Naive thymus-derived CD4-positive, alpha-beta T cell (primary cell): ENCODE measurements at regions of chr22 and their contacts with region 1.

Region 1: DNA sequence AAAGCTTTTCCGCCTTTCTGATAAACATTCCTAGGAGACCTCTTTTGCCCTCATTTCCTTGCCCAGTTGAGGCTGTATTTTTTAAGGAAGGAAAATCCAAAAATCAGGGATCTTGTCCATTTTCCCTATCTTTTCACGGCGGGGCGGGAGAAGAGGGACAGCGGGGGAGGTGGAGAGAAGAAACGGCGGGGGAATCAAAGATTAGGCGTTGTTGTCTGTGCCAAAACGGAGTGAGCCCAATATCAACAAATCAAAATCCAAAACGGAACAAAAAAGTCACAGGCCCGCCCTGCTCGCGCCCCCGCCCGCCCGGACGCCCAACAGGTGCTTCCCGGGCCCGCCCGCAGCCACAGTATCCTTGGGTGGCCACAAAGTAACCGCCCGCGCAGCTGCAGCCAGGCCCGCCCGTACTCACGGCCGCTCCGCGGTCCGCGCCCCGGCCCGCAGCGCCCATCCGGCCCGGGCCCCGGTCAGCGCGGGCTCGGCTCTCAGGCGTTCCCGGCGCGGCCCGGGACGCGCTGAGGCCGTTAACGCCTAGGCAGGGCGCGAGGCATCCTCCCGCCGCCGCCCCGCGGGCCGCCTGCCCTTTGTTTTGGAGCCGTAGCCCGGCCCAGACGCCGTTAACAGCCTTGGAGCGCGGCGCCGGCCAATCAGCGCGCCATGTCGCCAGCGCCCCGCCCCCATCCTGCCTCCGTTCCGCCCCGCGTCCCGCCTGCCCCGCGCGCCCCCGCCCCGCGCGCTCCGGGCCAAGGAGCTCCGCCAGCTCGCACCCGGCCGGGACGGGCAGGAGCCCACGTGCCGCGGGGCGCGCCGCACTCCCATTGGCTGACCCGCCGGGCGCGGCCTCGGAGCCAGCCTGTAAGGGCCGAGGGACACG is at the start of gene YPEL1:
- DNase-seq: peak; percentile 94 to 99 (median 97)
- ATAC-seq: peak; percentile 96
- H3K4me3 ChIP-seq: peak within 1 kb of the TSS; percentile 51
- H3K4me3 Mint-ChIP-seq: peak within 1 kb of the TSS; percentile 86 to 96 (median 92)
- H3K27ac ChIP-seq: peak within 1 kb of the TSS; percentile 66
- H3K27ac Mint-ChIP-seq: peak within 1 kb of the TSS; percentile 67 to 91 (median 85)
- H3K4me1 ChIP-seq: peaks cover 0 to 7% of the 10 kb centered on the region in 2 donors
- H3K4me1 Mint-ChIP-seq: peaks cover 13 to 26% (median 15%) of the 10 kb centered on the region in 7 donors
- H3K27me3 ChIP-seq: no peaks in the 10 kb centered on the region
- H3K27me3 Mint-ChIP-seq: peaks cover 0 to 22% (median 0%) of the 10 kb centered on the region in 5 donors
- total RNA-seq, gene YPEL1: 2.5 to 9.5 (median 3.6) TPM

Region 2: GRCh38 chr22:21666786-21667185 is 68.7 kb before region 1 on chr22:
- CTCF ChIA-PET with region 1: no interaction called
- POLR2A ChIA-PET with region 1: interaction called, 6 read pairs
- intact Hi-C with region 1: loop called (anchors 1 to 2 kb)
- DNase-seq: no peak
- ATAC-seq: no peak
- H3K4me3 ChIP-seq: peak overlapping the region; percentile 99
- H3K4me3 Mint-ChIP-seq: peak overlapping the region; percentile 95 to 100 (median 98)
- H3K27ac ChIP-seq: peak overlapping the region; percentile 86
- H3K27ac Mint-ChIP-seq: peak overlapping the region; percentile 79 to 99 (median 97)
- H3K4me1 ChIP-seq: peaks cover 6 to 16% of the 10 kb centered on the region in 2 donors
- H3K4me1 Mint-ChIP-seq: peaks cover 29 to 45% (median 42%) of the 10 kb centered on the region in 7 donors
- H3K27me3 ChIP-seq: no peaks in the 10 kb centered on the region
- H3K27me3 Mint-ChIP-seq: peaks cover 0 to 2% (median 0%) of the 10 kb centered on the region in 5 donors

Region 3: GRCh38 chr22:21766691-21767462 is 31.4 kb after region 1 on chr22:
- CTCF ChIA-PET with region 1: no interaction called
- POLR2A ChIA-PET with region 1: interaction called, 3 read pairs
- intact Hi-C with region 1: loop called in 1 of 2 experiments (anchors 2 kb)
- DNase-seq: peak in 1 of 9 donors; percentile 68
- ATAC-seq: peak; percentile 82
- H3K4me3 ChIP-seq: peak overlapping the region; percentile 14
- H3K4me3 Mint-ChIP-seq: peak overlapping the region in 2 of 10 donors; percentile 39 to 59
- H3K27ac ChIP-seq: no peak overlapping the region
- H3K27ac Mint-ChIP-seq: peak overlapping the region in 8 of 9 donors; percentile 36 to 80 (median 57)
- H3K4me1 ChIP-seq: peaks cover 0 to 66% of the 10 kb centered on the region in 2 donors
- H3K4me1 Mint-ChIP-seq: peaks cover 6 to 61% (median 20%) of the 10 kb centered on the region in 7 donors
- H3K27me3 ChIP-seq: no peaks in the 10 kb centered on the region
- H3K27me3 Mint-ChIP-seq: no peaks in the 10 kb centered on the region

Region 4: DNA sequence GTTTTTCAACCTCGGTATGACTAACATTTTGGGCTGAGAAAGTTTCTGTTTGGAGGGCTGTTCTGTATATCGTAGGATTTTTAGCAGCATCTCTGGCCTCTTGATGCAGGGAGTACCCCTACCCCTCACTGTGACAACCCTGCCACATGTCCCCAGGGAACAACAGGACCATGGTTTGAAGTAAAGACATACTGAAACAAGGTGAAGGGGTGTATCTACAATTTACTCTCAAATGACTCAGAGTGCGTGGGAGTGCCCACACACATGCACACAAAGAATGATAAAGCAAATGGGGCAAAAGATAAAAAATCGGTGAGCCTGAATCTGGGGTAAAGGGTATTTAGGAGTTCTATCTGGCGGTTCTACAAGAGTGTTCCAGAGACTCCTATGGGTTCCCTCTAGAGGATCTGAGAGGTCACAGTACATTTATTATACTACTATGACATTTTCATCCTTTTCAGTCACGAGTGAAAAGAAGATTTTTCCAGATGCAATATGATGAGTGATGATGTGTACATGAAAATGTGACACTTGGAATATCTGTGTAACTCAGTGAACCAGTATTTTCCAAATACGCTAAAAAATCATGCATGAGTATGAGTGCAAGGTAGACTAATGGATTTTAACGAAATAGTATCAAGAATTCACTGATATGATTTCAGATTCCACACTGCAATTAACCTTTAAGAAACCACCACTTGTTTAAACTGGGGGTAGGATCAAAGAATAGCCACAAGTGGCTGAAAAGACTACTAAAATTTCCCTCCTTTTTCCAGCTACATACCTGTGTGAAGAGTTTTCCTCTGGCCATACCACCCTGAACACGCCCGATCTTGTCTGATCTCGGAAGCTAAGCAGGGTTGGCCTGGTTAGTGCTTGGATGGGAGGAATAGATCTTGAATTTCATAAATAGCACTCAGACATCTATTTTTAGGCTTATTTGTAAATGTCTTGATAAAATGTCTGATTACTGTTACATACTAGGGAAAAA is 56.5 kb after region 1 on chr22:
- CTCF ChIA-PET with region 1: no interaction called
- POLR2A ChIA-PET with region 1: no interaction called
- intact Hi-C with region 1: no loop called
- DNase-seq: peak in 1 of 9 donors; percentile 53
- ATAC-seq: no peak
- H3K4me3 ChIP-seq: no peak overlapping the region
- H3K4me3 Mint-ChIP-seq: no peak overlapping the region
- H3K27ac ChIP-seq: no peak overlapping the region
- H3K27ac Mint-ChIP-seq: peak overlapping the region in 5 of 9 donors; percentile 2 to 61 (median 36)
- H3K4me1 ChIP-seq: no peaks in the 10 kb centered on the region
- H3K4me1 Mint-ChIP-seq: peaks cover 0 to 12% (median 0%) of the 10 kb centered on the region in 7 donors
- H3K27me3 ChIP-seq: no peaks in the 10 kb centered on the region
- H3K27me3 Mint-ChIP-seq: no peaks in the 10 kb centered on the region

Region 5: DNA sequence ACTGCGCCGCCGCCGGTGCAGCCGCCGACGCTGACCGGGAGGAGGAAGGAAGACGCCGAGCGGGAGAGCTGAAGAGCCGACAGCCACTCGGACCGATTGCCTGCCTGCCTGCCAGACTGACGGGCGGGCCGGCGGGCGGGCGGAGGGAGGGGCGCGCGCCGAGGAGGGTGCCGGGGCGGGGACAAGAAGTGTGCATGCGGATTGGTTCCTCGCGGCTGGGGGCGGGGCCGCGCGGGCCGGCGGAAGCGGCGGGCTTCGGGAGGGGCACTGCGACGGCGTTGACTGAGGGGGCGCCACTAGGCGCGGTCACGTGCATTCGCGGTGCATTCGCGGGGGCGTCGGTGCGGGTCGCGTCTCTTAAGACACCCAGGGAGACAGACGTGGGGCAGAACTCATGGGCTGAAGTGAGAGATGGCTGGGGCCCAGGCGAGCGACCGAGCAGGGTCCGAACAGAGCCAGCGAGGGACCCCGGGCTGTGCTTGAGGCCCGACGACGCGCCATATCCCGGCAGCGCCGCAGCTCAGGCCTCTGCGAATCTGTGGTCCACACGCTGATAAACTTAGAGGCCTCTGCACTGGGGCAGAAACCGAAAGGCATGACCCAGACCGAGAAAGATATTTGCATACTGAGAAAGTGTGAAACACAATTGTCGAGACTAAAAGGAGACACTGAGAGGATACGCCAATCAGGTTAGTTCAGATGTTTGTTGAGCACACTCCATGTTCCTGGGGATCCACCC is 132.3 kb after region 1 on chr22 and contains the start of gene MAPK1:
- CTCF ChIA-PET with region 1: no interaction called
- POLR2A ChIA-PET with region 1: interaction called, 3 read pairs
- intact Hi-C with region 1: loop called (anchors 1 kb)
- DNase-seq: peak; percentile 88 to 96 (median 92)
- ATAC-seq: peak; percentile 99
- H3K4me3 ChIP-seq: peak within 1 kb of the TSS; percentile 73
- H3K4me3 Mint-ChIP-seq: peak within 1 kb of the TSS; percentile 87 to 99 (median 98)
- H3K27ac ChIP-seq: peak within 1 kb of the TSS; percentile 88
- H3K27ac Mint-ChIP-seq: peak within 1 kb of the TSS; percentile 89 to 99 (median 95)
- H3K4me1 ChIP-seq: peaks cover 23 to 36% of the 10 kb centered on the region in 2 donors
- H3K4me1 Mint-ChIP-seq: peaks cover 36 to 52% (median 47%) of the 10 kb centered on the region in 7 donors
- H3K27me3 ChIP-seq: no peaks in the 10 kb centered on the region
- H3K27me3 Mint-ChIP-seq: peaks cover 0 to 16% (median 0%) of the 10 kb centered on the region in 5 donors
- total RNA-seq, gene MAPK1: 68.9 to 120 (median 105) TPM

Region 6: DNA sequence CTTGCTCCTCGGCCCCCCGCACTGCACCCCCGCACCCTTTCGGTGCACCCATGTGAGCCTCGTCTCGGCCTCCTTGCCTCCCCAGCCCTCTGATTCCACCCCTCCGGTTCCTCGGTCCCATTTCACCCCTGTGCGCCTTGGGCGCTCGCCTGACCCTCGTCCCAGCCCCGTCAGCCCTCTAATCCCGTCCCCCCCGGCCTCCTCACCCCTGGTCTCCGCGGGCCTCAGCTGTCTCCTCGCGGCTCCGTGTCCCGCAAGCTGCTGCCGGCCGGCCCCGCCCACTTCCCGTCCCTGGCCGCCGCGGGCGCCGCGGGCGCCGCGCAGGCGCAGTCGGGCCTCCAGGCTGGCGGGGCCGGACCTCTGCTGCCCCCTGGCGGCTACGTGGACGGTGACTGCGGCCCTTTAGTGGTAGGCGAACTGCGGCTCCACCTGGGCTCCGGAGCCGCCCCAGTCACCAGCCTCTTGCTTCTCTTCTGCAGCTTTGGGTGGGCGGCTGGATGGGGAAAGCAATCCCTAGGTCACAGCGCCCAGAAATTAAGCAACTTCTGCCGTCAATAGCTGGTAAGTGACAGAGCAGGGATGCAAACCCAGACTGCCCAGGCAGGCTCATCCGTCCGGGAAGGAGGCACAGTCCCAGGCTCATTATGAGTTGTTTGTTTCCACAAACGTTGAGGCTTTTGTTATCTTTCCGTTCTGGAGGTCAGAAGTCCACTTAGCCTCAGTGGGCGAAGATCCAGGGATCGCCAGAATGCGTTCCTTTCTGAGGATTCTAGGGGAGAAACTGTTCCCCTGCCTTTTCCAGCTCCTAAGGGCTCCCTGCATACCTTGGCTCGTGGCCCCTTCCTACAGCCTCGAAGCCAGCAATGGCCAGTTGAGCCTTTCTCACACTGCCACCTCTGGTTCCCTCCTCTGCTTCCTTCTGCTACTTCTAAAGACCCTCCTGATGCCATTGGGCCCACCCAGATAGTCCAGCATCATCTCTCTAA is 217.4 kb after region 1 on chr22 and contains the start of gene PPM1F:
- CTCF ChIA-PET with region 1: no interaction called
- POLR2A ChIA-PET with region 1: no interaction called
- intact Hi-C with region 1: loop called in 1 of 2 experiments (anchors 2 kb)
- DNase-seq: peak; percentile 79 to 100 (median 92)
- ATAC-seq: peak; percentile 98
- H3K4me3 ChIP-seq: peak within 1 kb of the TSS; percentile 79
- H3K4me3 Mint-ChIP-seq: peak within 1 kb of the TSS; percentile 80 to 90 (median 88)
- H3K27ac ChIP-seq: peak within 1 kb of the TSS; percentile 78
- H3K27ac Mint-ChIP-seq: peak within 1 kb of the TSS in 8 of 9 donors; percentile 43 to 80 (median 72)
- H3K4me1 ChIP-seq: peaks cover 7% of the 10 kb centered on the region in 2 donors
- H3K4me1 Mint-ChIP-seq: peaks cover 16 to 25% (median 19%) of the 10 kb centered on the region in 7 donors
- H3K27me3 ChIP-seq: no peaks in the 10 kb centered on the region
- H3K27me3 Mint-ChIP-seq: no peaks in the 10 kb centered on the region
- total RNA-seq, gene PPM1F: 21.3 to 58.0 (median 27.8) TPM